Natural killer cell (primary cell): ENCODE measurements at regions of chr2 and their contacts with region 1.

Region 1: GRCh38 chr2:120252225-120253021 is at the start of gene RALB:
- DNase-seq: peak; percentile 98 to 99
- ATAC-seq: peak; percentile 94 to 98 (median 94)
- H3K4me3 ChIP-seq: peak within 1 kb of the TSS; percentile 86
- H3K4me3 Mint-ChIP-seq: peak within 1 kb of the TSS; percentile 100
- H3K27ac ChIP-seq: peak within 1 kb of the TSS; percentile 71
- H3K27ac Mint-ChIP-seq: peak within 1 kb of the TSS; percentile 94 to 96
- H3K4me1 ChIP-seq: peaks cover 15% of the 10 kb centered on the region
- H3K4me1 Mint-ChIP-seq: peaks cover 48 to 57% of the 10 kb centered on the region in 2 donors
- H3K27me3 ChIP-seq: no peaks in the 10 kb centered on the region
- H3K27me3 Mint-ChIP-seq: peaks cover 7 to 10% of the 10 kb centered on the region in 2 donors
- CTCF ChIP-seq: no peak
- total RNA-seq, gene RALB: 21.0 to 25.9 (median 25.4) TPM

Region 2: GRCh38 chr2:119759451-119760236 is 492.8 kb before region 1 on chr2 and contains the start of gene PTPN4:
- intact Hi-C with region 1: loop called (anchors 2 kb)
- DNase-seq: peak; percentile 87 to 99
- ATAC-seq: peak; percentile 90 to 98 (median 90)
- H3K4me3 ChIP-seq: peak within 1 kb of the TSS; percentile 95
- H3K4me3 Mint-ChIP-seq: peak within 1 kb of the TSS; percentile 84
- H3K27ac ChIP-seq: peak within 1 kb of the TSS; percentile 92
- H3K27ac Mint-ChIP-seq: peak within 1 kb of the TSS; percentile 35 to 99
- H3K4me1 ChIP-seq: peaks cover 11% of the 10 kb centered on the region
- H3K4me1 Mint-ChIP-seq: peaks cover 47 to 49% of the 10 kb centered on the region in 2 donors
- H3K27me3 ChIP-seq: no peaks in the 10 kb centered on the region
- H3K27me3 Mint-ChIP-seq: no peaks in the 10 kb centered on the region
- CTCF ChIP-seq: no peak
- total RNA-seq, gene PTPN4: 265 to 347 (median 283) TPM

Region 3: DNA sequence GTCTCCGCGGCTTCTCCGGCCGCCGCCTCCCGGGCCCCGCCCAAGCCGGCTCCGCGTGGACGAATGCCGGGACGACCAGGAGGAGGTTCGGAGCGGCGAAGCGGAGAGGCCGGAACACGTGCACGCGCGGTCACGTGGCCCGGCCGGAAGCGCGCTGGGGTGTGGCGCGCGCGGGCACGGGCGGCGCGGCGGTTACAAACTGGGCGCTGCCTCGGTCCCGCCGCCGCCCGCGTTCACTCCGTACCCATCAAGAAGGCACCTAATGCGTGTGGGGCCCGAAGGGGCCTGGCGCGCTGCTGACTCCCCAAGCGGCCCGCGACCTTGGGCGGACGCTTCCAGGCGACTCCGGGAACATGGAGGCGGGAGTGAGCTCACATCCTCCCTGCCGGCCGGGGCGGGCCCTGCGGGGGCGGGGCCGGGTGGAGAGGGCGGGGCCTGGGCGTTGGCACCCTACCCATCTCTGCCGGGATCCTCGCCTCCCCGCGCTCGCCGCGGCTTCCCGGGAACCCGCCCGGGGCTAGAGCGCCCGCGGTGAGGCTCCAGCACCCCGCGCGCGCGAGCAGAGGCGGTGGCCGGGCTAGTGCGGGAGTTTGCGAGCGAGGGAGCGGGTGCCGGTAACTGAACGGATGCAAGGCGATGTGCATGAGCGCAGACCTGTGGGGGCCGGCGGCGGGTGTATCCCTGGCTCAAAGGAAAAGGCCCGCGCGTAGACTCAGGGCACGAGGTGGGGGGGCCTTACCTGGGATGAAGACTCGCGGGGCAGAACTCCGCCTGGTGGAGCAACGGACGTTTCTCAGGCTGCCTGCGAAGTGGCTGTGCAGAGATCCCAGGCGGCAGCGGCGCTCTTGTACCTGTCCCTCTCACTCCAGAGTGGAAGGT is 29.1 kb before region 1 on chr2 and contains the start of gene TMEM185B:
- intact Hi-C with region 1: loop called (anchors 1 kb)
- DNase-seq: peak; percentile 89 to 92
- ATAC-seq: peak; percentile 97
- H3K4me3 ChIP-seq: peak within 1 kb of the TSS; percentile 79
- H3K4me3 Mint-ChIP-seq: peak within 1 kb of the TSS; percentile 88
- H3K27ac ChIP-seq: peak within 1 kb of the TSS; percentile 93
- H3K27ac Mint-ChIP-seq: peak within 1 kb of the TSS; percentile 83 to 89
- H3K4me1 ChIP-seq: peaks cover 25% of the 10 kb centered on the region
- H3K4me1 Mint-ChIP-seq: peaks cover 34 to 49% of the 10 kb centered on the region in 2 donors
- H3K27me3 ChIP-seq: no peaks in the 10 kb centered on the region
- H3K27me3 Mint-ChIP-seq: no peaks in the 10 kb centered on the region
- CTCF ChIP-seq: no peak
- total RNA-seq, gene TMEM185B: 19.9 to 25.2 (median 19.9) TPM

Region 4: DNA sequence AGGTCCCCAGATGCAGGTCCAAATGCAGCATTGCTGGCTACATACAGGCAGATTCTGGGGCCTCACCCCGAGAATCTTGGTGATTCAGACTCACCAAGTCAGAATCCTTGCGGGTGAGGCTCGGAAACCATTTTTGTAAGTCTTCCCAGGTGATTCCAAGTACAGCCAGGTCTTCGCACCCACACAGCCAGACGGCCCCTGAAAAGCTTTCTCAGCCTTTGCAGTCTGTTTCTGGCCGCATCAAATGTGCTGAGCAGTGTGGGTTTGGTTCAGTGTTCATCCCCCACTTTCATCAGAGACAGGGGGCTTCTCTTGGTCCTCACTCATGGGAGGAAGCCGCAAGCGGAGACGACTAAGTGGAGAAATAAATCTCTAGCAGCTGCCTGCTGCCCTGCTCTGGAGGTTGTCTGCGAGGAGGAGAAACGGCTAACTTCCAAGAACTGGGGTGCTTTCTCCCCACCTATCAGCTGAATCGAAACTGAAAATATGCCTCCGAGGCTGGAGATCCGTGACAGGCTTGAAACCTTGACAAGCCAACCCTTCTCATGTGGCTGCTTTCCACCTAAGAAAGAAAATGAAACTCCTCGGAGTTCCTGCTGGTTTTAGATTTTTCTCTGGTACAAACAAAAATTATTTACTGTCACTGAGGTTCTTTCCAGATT is 20.3 kb before region 1 on chr2:
- intact Hi-C with region 1: loop called (anchors 1 kb)
- DNase-seq: peak; percentile 42 to 87
- ATAC-seq: peak; percentile 93 to 95 (median 94)
- H3K4me3 ChIP-seq: peak overlapping the region; percentile 58
- H3K4me3 Mint-ChIP-seq: peak overlapping the region; percentile 90
- H3K27ac ChIP-seq: peak overlapping the region; percentile 89
- H3K27ac Mint-ChIP-seq: peak overlapping the region; percentile 94 to 96
- H3K4me1 ChIP-seq: peaks cover 34% of the 10 kb centered on the region
- H3K4me1 Mint-ChIP-seq: peaks cover 28 to 45% of the 10 kb centered on the region in 2 donors
- H3K27me3 ChIP-seq: no peaks in the 10 kb centered on the region
- H3K27me3 Mint-ChIP-seq: no peaks in the 10 kb centered on the region
- CTCF ChIP-seq: no peak